Sigmoid colon (tissue), 7 donors: ENCODE measurements at regions of chr9 and their contacts with region 1.

Region 1: DNA sequence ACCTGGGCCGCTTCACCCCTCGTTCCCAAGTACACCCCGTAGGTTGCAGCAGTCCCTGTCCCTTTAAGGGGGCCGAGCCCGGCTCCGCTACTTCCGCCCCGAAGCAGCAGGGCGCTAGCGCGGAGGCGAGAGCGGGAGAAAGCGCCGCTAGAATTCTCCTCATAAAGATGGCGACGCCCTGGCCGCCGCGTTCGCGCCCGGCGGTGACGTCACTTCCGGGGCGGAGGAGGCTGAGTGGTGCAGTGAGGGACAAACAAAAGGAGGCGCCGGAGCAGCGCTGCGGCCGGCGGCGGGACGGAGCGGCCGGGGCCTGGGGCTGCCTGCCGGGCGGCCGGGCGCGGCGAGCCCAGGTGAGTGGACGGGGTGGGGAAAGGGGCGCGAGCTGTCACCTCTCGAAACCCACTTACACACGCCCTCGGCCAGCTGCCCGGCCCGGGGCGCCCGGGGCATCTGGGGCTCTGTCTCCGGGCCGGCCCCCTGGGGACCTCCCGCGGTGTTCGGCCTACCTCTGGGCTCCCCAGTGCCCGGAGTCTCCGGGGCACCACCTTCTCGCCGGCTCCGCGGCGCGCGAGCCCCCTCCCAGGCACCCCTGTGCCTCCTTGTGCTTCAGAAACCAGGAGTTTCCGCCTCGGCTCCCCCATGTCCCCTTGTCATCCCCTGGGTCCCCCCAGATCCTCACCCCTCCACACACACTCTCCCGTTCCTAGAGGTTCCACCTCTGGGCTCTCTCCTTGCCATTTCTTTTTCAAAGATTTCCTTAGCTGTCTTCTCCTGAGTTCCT is at the starts of genes KYAT1 and LRRC8A:
- DNase-seq: peak; percentile 98
- H3K4me3 ChIP-seq: peak within 1 kb of the TSS; percentile 75 to 99 (median 96)
- H3K27ac ChIP-seq: peak within 1 kb of the TSS; percentile 99
- H3K4me1 ChIP-seq: peaks cover 0 to 54% (median 49%) of the 10 kb centered on the region in 4 donors
- H3K27me3 ChIP-seq: no peaks in the 10 kb centered on the region
- CTCF ChIP-seq: no peak
- EP300 ChIP-seq: peak in 1 of 4 donors; percentile 68
- POLR2A ChIP-seq: no peak
- total RNA-seq, gene KYAT1: 3.9 to 8.0 (median 5.2) TPM
- total RNA-seq, gene LRRC8A: 26.0 to 59.5 (median 37.4) TPM

Region 2: DNA sequence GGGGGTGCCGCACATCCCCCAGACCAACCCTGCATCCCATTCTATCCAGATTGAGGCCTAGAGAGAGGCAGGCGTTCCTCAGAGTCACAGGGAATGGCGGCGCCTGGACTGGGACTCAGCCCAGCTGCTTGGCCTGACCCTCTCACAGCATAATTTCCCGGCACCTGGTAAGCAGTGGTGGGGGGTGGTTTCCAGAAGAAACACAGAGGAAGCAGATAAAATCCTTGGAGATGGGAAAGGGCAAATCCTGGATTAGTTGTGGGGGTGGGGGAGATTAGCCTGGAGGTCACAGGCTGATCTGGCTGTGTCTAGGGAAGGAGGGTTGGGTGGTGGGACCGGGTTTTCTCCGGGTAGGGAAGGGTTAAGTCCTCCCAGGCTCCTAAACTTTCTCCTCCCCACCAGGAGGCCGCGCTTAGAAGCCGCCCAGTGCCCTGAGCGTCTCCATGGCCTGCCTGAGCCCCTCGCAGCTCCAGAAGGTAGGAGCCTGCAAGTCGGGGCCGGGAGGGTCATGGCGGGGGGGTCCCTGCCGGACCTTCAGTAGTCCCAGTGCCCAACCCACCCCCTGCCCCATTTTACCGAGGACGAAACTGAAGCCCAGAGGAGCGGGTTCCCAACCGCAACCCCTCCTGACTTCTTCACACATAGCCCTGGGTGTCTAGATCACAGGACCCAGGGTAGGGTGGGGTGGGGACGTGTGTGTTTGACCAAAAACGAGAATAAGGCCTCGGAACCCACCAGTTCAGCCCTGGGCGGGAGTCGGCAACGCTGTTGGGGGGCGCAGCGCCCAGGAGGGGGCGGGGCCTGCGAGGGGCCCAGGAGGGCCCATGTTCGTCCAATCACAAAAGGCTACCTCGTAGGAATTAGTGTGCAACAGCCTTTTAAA is 40.0 kb after region 1 on chr9:
- intact Hi-C with region 1: loop called (anchors 2 kb)
- DNase-seq: peak; percentile 84
- H3K4me3 ChIP-seq: peak overlapping the region; percentile 61 to 63 (median 62)
- H3K27ac ChIP-seq: peak overlapping the region; percentile 86 to 88 (median 88)
- H3K4me1 ChIP-seq: peaks cover 0 to 52% (median 44%) of the 10 kb centered on the region in 4 donors
- H3K27me3 ChIP-seq: no peaks in the 10 kb centered on the region
- CTCF ChIP-seq: peak in 1 of 4 experiments; percentile 15
- EP300 ChIP-seq: no peak
- POLR2A ChIP-seq: no peak

Region 3: DNA sequence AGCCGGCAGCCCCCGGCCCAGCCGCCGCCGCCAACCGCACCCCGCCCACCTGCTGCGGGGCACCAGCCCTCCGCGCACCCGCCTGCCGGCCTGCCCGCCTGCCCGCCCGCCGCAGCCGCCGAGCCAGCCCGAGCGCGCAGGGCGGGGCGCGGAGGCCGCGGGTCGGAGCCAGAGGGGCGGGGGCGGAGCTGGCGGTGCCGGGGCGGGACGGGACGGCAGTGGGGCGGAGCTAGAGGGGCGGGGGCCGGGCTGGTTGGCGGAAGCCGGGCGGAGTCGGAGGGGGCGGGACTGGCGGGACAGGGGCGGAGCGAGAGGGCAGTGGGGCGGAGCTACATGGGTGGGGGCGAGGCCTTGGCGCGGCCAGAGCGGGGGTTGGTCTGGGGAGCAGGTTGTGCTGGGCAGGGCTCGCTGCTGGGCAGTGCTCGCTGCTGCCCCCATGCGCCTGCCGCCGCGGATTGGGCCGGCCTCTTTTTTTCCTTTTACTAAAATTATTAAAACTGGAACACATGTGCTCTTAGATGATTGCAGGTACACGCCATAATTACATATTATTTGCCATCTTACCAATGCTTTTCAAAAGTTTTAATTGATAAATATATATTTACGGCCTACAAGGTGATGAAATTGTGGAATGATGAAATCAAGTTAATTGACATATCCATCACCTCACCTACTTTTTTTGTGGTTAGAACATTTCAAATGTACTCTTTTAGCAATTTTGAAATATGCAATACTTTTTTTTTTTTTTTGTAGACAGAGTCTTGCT is 146.3 kb after region 1 on chr9 and contains the start of gene SH3GLB2:
- intact Hi-C with region 1: loop called (anchors 5 kb)
- DNase-seq: peak; percentile 98
- H3K4me3 ChIP-seq: peak within 1 kb of the TSS; percentile 51 to 96 (median 95)
- H3K27ac ChIP-seq: peak within 1 kb of the TSS; percentile 73 to 85 (median 84)
- H3K4me1 ChIP-seq: peaks cover 0 to 36% (median 31%) of the 10 kb centered on the region in 4 donors
- H3K27me3 ChIP-seq: no peaks in the 10 kb centered on the region
- CTCF ChIP-seq: peak; percentile 56 to 92 (median 71)
- EP300 ChIP-seq: no peak
- POLR2A ChIP-seq: no peak
- total RNA-seq, gene SH3GLB2: 66.7 to 78.3 (median 72.9) TPM